Right ventricle myocardium inferior (tissue), 1 donor: ENCODE measurements at regions of chr22 and their contacts with region 1.

Region 1: GRCh38 chr22:29040385-29041275 is 21.0 kb downstream of the C22orf31 start:
- DNase-seq: no peak
- ATAC-seq: peak; percentile 83

Region 2: DNA sequence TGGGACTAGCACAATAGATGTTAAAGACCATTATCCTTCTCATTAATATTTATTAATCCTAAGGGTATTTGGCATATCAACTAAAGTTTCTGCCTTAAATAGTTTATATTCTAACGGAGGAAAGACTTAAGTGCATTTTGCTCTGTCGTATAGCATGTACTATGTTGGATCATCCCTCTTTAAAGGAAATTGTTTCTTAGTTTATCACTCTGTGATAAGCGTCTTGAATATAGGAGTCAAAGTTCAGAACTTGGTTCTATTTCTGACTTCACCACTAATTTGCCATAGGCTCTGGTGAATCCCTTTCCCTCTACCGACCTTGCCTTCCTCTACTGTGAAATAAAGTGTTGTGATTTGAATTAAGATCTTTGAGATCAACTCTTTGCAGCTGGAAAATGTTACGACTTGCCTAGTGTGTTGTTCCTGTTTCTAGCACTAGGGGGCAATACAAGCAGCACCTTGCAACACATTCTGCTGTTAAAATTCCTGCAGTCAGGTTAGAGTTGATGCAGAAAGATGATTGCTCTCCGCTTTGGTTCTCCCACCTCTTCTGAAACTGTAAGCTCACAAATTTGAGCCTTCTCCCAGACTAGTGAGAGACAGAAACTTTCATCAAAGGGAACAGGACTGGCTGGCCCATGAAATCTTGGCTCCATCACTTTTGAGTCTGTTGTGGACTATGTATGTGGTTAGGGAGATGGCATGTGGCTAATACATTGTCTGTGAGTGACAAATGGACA is 185.1 kb before region 1 on chr22:
- intact Hi-C with region 1: loop called (anchors 1 kb)
- DNase-seq: no peak
- ATAC-seq: peak; percentile 56